Activated CD4-positive, alpha-beta T cell treated with anti-CD3 and anti-CD28 coated beads for 36 hours (primary cell): ENCODE measurements at regions of chr9 and their contacts with region 1.

Region 1: GRCh38 chr9:110623462-110624025 is 44.0 kb upstream of the SVEP1 start:
- DNase-seq: peak; percentile 28
- ATAC-seq: no peak
- H3K4me3 Mint-ChIP-seq: no peak overlapping the region
- H3K27ac Mint-ChIP-seq: no peak overlapping the region
- H3K4me1 Mint-ChIP-seq: peaks cover 16% of the 10 kb centered on the region
- H3K27me3 Mint-ChIP-seq: peaks cover 8% of the 10 kb centered on the region

Region 2: GRCh38 chr9:109903515-109904138 is 719.9 kb before region 1 on chr9:
- CTCF ChIA-PET with region 1: no interaction called
- POLR2A ChIA-PET with region 1: no interaction called
- intact Hi-C with region 1: loop called in 1 of 2 experiments (anchors 10 kb)
- DNase-seq: peak; percentile 82
- ATAC-seq: peak; percentile 85
- H3K4me3 Mint-ChIP-seq: no peak overlapping the region
- H3K27ac Mint-ChIP-seq: peak overlapping the region; percentile 45
- H3K4me1 Mint-ChIP-seq: peaks cover 5% of the 10 kb centered on the region
- H3K27me3 Mint-ChIP-seq: peaks cover 4% of the 10 kb centered on the region

Region 3: DNA sequence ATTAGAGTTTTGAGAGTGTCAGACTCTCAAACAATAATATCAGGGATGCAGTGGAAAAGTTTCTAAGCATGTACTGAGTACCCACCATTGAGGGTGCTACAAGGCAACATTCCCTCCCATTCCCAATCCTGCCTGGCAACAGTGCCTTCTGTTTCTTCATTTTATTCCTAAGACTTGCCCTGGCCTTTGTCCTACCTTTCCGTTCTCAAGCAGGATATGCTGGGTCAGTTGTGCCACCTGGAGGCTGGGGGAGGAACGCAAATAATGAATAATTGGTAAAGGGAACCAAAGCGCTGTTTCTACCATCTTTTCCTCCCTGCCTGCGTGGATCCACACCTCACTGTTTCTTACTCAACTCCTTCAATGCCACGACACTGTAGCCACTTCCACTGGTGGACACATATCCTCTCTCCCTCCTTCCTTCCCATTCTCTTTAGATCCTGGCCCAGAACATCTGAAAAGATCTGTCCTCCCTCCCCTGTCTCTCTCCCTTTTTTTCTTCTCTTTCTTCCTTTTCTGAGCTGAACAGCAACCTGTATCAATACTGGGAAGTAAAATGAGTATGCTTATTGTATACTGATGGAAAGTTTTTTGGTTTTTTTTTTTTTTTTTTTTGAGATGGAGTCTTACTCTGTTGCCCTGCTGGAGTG is 565.1 kb before region 1 on chr9:
- CTCF ChIA-PET with region 1: no interaction called
- POLR2A ChIA-PET with region 1: no interaction called
- intact Hi-C with region 1: loop called in 1 of 2 experiments (anchors 10 kb)
- DNase-seq: peak; percentile 71
- ATAC-seq: peak; percentile 66
- H3K4me3 Mint-ChIP-seq: no peak overlapping the region
- H3K27ac Mint-ChIP-seq: peak overlapping the region; percentile 48
- H3K4me1 Mint-ChIP-seq: peaks cover 9% of the 10 kb centered on the region
- H3K27me3 Mint-ChIP-seq: no peaks in the 10 kb centered on the region

Region 4: DNA sequence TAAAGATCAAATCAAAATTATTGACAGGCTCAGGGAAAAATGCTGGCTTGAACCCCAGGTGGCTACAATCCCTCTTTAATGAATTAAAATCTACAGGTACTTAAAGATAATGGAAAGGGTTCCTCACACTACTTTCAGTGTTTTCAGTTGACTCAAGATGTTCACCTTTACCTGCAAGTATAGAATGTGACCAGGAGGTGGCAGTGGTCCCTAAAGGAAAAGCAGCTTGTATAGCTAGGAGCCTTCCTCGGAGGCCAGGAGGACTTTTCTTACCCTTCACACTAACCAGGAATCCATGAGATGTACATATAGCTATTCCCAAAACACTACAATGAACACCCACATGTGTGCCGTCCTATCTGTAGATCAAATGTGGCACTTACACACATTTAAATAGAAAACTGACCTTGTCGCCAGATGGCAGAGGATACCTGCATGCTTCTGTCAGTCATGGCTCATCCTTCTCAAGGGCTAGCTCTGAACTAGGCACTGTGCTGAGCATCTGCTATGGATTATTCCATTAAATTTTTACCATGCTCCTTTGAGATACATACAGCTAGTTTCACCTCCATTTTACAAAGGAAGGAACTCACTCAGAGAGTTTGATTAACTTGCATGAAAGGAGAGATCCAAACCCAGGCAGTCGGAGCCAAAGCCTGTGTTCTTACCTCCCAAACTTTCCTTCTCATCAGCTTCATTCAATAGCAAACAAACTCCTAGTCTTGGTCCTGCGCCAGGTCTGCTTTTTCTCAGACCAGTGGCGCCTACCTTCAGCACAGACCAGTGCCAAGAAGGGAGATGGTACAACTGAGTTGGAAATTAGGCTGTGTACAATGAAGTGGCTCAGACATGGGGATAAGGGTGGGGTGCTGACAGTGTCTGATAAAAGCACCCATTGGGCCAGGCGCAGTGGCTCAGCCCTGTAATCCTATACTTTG is 440.1 kb before region 1 on chr9:
- CTCF ChIA-PET with region 1: interaction called, 25 read pairs
- POLR2A ChIA-PET with region 1: no interaction called
- intact Hi-C with region 1: loop called (anchors 1 kb)
- DNase-seq: peak; percentile 77
- ATAC-seq: peak; percentile 90
- H3K4me3 Mint-ChIP-seq: no peak overlapping the region
- H3K27ac Mint-ChIP-seq: no peak overlapping the region
- H3K4me1 Mint-ChIP-seq: peaks cover 2% of the 10 kb centered on the region
- H3K27me3 Mint-ChIP-seq: no peaks in the 10 kb centered on the region

Region 5: DNA sequence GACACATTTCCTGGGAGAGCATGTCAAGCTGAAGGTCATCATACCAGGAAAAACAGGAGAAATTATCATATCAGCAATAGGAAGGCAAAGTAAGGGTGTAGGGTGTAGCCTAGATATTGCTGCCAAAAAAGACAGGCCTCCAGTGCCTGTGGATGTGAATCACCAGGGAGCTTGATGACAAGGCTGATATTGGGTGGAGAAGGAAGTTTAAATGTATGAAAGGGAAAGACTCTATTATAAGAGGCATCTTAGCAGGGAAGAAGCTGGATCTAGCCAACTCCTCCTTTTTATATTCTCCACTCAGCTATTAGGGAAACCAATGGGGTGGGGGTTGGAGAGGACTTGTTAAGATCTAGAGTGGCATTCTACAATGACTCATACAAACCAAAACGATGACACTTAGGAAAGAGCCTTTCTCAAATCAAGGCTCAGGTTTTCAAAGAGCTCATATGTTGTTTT is 272.5 kb before region 1 on chr9:
- CTCF ChIA-PET with region 1: no interaction called
- POLR2A ChIA-PET with region 1: no interaction called
- intact Hi-C with region 1: loop called in 1 of 2 experiments (anchors 5 kb)
- DNase-seq: peak; percentile 9
- ATAC-seq: peak; percentile 88
- H3K4me3 Mint-ChIP-seq: no peak overlapping the region
- H3K27ac Mint-ChIP-seq: no peak overlapping the region
- H3K4me1 Mint-ChIP-seq: peaks cover 7% of the 10 kb centered on the region
- H3K27me3 Mint-ChIP-seq: peaks cover 2% of the 10 kb centered on the region

Region 6: GRCh38 chr9:110427497-110428104 is 195.9 kb before region 1 on chr9:
- CTCF ChIA-PET with region 1: interaction called, 6 read pairs
- POLR2A ChIA-PET with region 1: no interaction called
- intact Hi-C with region 1: loop called (anchors 2 kb)
- DNase-seq: peak; percentile 71
- ATAC-seq: no peak
- H3K4me3 Mint-ChIP-seq: no peak overlapping the region
- H3K27ac Mint-ChIP-seq: no peak overlapping the region
- H3K4me1 Mint-ChIP-seq: no peaks in the 10 kb centered on the region
- H3K27me3 Mint-ChIP-seq: no peaks in the 10 kb centered on the region

Region 7: DNA sequence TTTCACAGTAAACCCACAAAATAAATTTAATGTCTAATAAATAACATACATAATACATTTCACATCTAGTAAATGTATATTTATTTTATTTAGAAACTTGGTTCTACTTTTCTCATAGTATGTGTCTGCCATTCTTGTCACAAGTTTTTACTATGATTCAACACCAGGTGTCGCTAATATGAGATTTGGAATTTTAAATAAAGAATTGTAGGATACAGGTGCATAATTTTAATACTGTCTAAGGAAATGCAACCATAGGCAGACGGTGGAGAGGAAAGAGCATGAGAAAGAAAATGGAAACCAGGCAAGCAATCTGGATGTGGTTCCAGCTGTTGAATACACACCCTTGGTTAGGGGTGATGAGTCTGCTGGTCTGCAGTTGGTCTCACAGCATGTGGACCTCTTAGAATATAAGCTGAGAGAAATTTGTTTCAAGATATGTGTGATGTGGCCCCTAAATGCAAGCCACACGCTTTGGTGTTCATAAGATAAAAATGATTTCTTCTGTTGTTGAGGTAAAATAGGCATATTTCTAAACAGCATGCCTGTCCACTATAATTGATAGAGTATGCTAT is 171.2 kb before region 1 on chr9:
- CTCF ChIA-PET with region 1: interaction called, 4 read pairs
- POLR2A ChIA-PET with region 1: no interaction called
- intact Hi-C with region 1: loop called (anchors 1 to 5 kb)
- DNase-seq: no peak
- ATAC-seq: no peak
- H3K4me3 Mint-ChIP-seq: no peak overlapping the region
- H3K27ac Mint-ChIP-seq: no peak overlapping the region
- H3K4me1 Mint-ChIP-seq: no peaks in the 10 kb centered on the region
- H3K27me3 Mint-ChIP-seq: peaks cover 3% of the 10 kb centered on the region